MCF 10A (cell line): ENCODE measurements at regions of chr1 and their contacts with region 1.

Region 1: DNA sequence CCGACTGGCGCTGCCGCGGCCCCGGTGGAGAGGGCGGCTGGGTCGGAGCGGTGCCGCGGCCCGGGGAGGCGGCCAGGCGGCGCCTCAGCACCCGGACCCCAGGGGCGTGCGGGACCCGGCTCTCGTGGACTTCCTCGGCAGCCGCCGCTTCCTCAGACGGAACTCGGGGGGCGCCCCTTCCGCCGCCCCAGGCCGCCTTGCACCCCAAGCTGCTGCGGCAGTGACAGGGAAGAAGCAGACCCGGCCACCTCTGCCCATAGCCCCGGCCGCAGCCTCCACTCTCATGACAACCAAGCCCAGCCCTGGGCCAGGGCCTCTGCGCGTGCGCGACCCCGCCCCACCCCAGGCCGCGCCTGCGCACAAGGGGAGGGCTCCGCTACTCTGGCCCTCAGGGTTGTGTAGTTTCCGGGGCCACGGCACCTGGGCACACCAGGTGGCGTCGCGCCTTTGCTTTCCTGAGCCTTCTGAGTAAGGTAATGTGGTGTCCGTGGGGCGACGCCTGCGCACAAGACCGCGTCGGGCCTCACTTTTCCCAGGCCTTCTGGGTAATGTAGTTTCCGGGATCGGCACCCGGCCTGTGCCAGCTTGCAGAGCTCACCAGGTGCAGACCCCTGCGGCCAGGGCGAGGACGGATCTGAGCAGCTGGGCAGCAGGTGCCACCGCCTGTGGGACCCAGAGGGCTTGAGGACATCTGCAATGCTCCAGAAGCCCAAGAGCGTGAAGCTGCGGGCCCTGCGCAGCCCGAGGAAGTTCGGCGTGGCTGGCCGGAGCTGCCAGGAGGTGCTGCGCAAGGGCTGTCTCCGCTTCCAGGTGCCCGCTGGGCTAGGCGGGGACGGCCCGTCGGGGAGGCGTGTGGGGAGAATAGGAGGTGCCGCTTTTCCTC is at the starts of genes CEP104 and DFFB:
- DNase-seq: peak; percentile 98
- H3K4me3 Mint-ChIP-seq: peak within 1 kb of the TSS; percentile 97
- H3K27ac Mint-ChIP-seq: peak within 1 kb of the TSS; percentile 84
- H3K4me1 Mint-ChIP-seq: peaks cover 15% of the 10 kb centered on the region
- H3K27me3 Mint-ChIP-seq: no peaks in the 10 kb centered on the region
- CTCF ChIP-seq: no peak
- total RNA-seq, gene CEP104: 68.7 and 74.1 TPM in 2 replicates
- total RNA-seq, gene DFFB: 4.5 and 4.8 TPM in 2 replicates

Region 2: GRCh38 chr1:3785456-3786157 is 71.5 kb before region 1 on chr1:
- CTCF ChIA-PET with region 1: no interaction called
- POLR2A ChIA-PET with region 1: no interaction called
- intact Hi-C with region 1: no loop called
- DNase-seq: no peak
- H3K4me3 Mint-ChIP-seq: no peak overlapping the region
- H3K27ac Mint-ChIP-seq: no peak overlapping the region
- H3K4me1 Mint-ChIP-seq: peaks cover 4% of the 10 kb centered on the region
- H3K27me3 Mint-ChIP-seq: no peaks in the 10 kb centered on the region
- CTCF ChIP-seq: peak; percentile 20

Region 3: DNA sequence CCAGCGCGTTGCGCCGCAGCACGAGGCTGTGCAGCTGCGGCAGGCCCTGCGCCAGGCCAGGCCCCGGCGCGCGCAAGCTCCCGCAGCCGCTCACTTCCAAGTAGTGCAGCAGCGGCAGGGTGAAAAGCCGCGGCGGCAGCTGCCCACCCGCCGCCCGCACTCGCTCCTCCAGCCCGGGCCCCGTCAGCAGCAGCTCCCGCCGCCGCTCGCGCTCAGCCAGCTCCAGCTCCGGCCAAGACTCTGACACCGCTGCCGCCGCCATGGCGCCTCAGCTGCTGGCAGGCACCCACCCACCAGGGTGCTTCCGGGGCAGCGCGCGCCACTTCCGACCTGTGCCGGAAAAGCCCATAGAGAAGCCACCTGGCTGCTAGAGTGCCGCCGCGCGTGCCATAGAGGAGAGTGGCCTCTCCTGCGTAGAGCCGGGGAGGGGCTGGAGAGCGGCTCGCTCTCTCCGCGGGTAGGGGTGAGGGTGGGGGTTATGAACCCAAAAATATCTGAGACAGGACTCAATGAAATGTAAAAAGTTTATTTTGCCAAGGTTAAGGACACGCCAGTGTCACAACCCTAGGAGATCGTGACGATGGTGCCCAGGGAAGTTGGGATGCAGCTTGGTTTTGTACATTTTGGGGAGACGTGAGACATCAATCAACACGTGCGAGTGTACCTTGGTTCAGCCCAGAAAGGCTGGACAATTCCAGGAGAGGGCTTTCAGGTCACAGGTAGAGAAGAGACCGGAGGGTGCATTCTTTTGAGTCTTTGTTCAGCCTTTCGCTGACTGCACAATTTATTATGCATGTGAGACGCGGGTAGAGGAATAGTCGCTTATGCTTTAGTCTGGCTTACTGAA is 60.7 kb before region 1 on chr1 and contains the start of gene LRRC47:
- CTCF ChIA-PET with region 1: interaction called, 3 read pairs
- POLR2A ChIA-PET with region 1: interaction called, 11 read pairs
- intact Hi-C with region 1: no loop called
- DNase-seq: peak; percentile 92
- H3K4me3 Mint-ChIP-seq: peak within 1 kb of the TSS; percentile 94
- H3K27ac Mint-ChIP-seq: peak within 1 kb of the TSS; percentile 89
- H3K4me1 Mint-ChIP-seq: peaks cover 19% of the 10 kb centered on the region
- H3K27me3 Mint-ChIP-seq: peaks cover 5% of the 10 kb centered on the region
- CTCF ChIP-seq: no peak
- total RNA-seq, gene LRRC47: 46.1 and 53.0 TPM in 2 replicates

Region 4: DNA sequence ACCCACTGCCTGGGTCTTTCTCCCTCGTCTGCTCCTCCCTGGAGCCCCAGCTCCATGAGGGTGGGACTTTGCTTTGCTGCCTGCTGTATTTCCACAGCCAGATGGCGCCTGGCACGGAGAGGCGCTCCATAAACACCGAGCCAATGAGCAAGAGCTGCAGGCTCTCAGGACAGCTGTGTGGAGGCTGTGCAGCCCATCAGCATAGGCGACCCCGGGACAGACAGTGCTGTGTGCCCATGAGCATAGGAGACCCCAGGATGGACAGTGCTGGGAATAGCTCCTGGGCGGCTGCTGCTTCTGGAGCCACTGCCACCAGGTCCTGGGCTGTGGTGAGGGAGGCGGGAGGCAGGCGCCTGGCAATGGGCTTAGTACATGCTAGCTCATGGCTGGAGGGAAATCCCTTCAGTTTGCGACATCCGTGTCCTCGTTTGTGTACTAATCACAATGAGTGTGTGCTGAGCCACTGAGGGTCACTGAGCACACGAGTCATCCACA is 29.3 kb before region 1 on chr1:
- CTCF ChIA-PET with region 1: no interaction called
- POLR2A ChIA-PET with region 1: no interaction called
- intact Hi-C with region 1: no loop called
- DNase-seq: no peak
- H3K4me3 Mint-ChIP-seq: no peak overlapping the region
- H3K27ac Mint-ChIP-seq: no peak overlapping the region
- H3K4me1 Mint-ChIP-seq: no peaks in the 10 kb centered on the region
- H3K27me3 Mint-ChIP-seq: no peaks in the 10 kb centered on the region
- CTCF ChIP-seq: no peak

Region 5: DNA sequence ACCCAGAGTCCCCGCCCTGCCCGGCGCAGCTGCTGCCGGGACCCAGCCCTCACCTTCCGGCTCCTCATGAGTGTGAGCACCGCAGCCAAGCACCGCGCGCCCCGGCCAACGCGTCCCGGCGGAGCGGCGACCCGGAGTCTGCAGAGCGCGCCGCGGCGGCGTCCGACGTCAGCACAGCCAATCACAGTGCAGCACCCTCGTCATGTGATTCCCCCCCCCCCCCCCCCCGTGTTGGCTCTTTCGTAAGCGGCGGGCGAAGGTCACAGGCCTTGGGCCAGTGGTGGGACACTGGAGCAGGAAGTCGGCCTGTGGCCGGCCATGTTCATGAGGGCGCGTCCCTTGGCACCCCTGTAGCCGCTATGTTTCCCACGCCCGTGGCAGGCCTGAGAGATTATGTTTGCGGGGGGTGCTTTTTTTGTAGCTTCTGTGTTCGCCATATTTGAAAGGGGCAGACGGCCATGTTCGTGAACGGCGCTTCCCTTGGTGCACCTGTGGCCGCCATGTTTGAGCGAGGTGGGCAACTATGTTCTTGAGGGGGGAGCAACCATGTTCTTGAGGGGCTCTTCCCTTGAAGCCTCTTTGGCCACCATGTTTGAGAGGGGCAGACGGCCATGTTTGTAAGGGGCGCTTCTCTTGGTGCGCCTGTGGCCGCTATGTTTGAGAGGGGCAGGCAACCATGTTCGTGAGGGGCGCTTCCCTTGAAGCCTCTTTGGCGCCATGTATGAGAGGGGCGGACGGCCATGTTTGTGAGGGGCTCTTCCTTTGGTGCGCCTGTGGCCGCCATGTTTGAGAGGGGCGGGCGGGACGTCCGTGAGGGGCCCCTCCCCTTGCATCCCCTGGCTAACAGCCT is 43.2 kb after region 1 on chr1 and contains the start of gene C1orf174:
- CTCF ChIA-PET with region 1: interaction called, 6 read pairs
- POLR2A ChIA-PET with region 1: interaction called, 47 read pairs
- intact Hi-C with region 1: loop called (anchors 1 kb)
- DNase-seq: peak; percentile 96
- H3K4me3 Mint-ChIP-seq: peak within 1 kb of the TSS; percentile 84
- H3K27ac Mint-ChIP-seq: peak within 1 kb of the TSS; percentile 99
- H3K4me1 Mint-ChIP-seq: peaks cover 6% of the 10 kb centered on the region
- H3K27me3 Mint-ChIP-seq: no peaks in the 10 kb centered on the region
- CTCF ChIP-seq: no peak
- total RNA-seq, gene C1orf174: 22.4 and 24.4 TPM in 2 replicates

Region 6: DNA sequence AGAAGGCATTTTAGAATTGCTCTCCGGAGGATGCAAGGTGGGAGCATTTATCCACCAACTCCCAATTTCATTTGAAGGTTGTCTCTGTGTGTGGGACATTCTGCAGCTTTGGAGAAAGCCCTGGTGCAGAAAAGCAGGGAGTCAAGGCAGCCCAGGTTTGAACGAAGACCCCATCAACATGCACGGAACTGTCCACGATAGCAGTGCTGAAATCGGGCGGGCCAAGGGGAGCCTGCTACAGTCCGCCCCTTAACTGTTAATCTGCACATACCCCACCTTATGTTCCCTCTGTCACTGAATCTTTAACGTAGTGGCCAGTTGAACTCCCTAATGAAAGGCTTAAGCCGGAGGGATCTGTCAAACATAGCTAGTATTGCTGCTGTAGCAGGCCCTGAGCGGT is 111.7 kb after region 1 on chr1:
- CTCF ChIA-PET with region 1: no interaction called
- POLR2A ChIA-PET with region 1: no interaction called
- intact Hi-C with region 1: no loop called
- DNase-seq: no peak
- H3K4me3 Mint-ChIP-seq: no peak overlapping the region
- H3K27ac Mint-ChIP-seq: no peak overlapping the region
- H3K4me1 Mint-ChIP-seq: no peaks in the 10 kb centered on the region
- H3K27me3 Mint-ChIP-seq: no peaks in the 10 kb centered on the region
- CTCF ChIP-seq: no peak